ENCODE measurements at regions of chr3 and their contacts with region 1.

Region 1: DNA sequence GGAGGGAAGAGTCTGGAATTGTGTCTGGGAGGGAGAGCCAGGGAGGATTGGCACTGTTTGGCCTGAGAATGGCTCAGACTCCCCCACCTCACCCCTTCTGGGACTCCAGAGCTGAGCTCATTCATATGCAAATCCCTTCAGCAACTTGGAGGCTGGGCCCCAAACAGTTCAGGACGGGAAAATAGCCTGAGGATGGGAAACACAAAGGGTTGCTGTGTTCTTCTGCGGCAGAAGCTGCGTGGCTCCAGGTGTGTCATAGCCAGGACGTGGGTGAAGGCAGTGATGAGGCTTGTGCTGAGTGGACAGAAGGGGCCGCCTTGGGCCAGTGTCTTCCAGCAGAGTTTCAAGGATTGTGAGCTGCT is 16.6 kb downstream of the MASP1 start:
- DNase-seq: no peak
- CTCF ChIP-seq: no peak

Region 2: DNA sequence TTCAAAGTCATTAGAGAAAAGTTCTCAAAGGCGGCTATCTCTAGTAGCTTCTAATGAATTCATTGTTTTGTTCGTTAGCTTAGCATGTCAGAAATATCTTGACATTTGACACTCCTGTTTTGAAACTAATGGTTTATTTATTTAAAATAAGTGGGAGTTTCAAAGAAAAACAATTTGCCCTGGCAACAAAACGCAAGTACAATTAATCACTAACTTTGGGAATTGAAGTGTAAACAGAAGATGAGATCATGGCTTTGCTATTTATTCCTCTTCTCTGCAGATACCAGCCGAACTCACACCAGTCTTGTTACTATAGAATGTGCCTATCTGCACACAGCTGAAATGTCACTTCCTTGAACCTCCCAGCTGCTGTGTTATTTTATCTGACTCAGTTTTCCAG is 10.9 kb before region 1 on chr3:
- CTCF ChIA-PET with region 1: interaction called, 18 read pairs
- POLR2A ChIA-PET with region 1: no interaction called
- DNase-seq: no peak
- CTCF ChIP-seq: no peak

Region 3: DNA sequence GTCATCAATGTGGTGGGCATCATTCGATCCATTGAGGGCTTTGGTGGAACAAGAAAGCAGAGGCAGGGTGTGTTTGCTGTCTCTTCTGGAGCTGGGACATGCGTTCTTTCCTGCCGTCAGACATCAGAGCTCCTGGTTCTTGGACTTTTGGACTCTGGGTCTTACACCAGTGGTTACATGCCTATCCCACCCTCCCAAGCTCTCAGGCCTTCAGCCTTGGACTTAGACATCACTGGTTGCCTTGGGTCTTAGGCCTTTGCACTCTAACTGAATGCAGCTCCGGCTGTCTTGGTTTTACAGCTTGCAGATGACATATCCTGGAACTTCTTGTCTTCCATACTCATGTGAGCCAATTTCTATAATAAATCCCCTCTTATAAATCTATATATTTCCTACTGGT is 24.7 kb after region 1 on chr3:
- CTCF ChIA-PET with region 1: no interaction called
- POLR2A ChIA-PET with region 1: no interaction called
- DNase-seq: no peak
- CTCF ChIP-seq: no peak

Region 4: GRCh38 chr3:187368251-187369088 is 93.5 kb after region 1 on chr3 and contains the start of gene RTP4:
- CTCF ChIA-PET with region 1: no interaction called
- POLR2A ChIA-PET with region 1: no interaction called
- DNase-seq: peak; percentile 66
- CTCF ChIP-seq: no peak